SK-N-SH (cell line): ENCODE measurements at regions of chr11 and their contacts with region 1.

Region 1: DNA sequence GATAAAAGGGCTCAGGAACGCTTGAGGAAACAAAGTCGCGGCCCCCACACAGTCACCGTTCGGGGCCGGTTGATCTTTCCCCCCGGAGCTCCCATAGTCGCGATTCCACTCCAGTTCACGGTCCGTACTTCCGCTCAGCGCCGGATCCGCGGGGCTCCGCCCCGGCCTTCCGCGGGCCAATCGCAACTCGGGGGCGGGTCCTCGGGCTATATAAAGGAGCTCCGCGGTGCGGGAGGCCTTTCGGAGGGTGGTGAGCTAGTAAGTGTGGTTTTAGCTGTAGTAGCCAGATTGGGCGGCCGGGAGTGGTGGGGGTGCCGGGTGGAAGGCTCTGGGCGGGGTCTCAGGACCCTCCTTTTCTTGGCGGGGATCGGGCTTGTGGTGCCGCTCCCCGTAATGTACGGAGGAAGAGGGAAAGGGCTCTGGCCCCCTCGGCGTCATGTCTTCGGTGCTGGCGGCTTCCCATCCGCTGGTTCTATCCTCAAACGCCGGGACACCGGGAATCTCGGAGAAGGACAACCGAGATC is at the starts of genes C11orf98 and CSKMT:
- DNase-seq: peak; percentile 97
- H3K4me3 ChIP-seq: peak within 1 kb of the TSS; percentile 78 to 95
- H3K27ac ChIP-seq: peak within 1 kb of the TSS; percentile 91 to 92
- H3K4me1 ChIP-seq: peaks cover 16 to 21% of the 10 kb centered on the region in 2 experiments; a peak in 3 of 4 replicates
- H3K27me3 ChIP-seq: no peaks in the 10 kb centered on the region
- CTCF ChIP-seq: no peak
- EP300 ChIP-seq: 0 out of 4 replicates have a peak, but pooled peaks of 1 of the 2 experiments have one; percentile 31
- RAD21 ChIP-seq: no peak
- polyA plus RNA-seq, gene C11orf98: 90.1 and 126 TPM in 2 replicates
- polyA plus RNA-seq, gene CSKMT: 9.5 and 11.1 TPM in 2 replicates

Region 2: GRCh38 chr11:62591448-62592145 is 73.5 kb before region 1 on chr11 and contains the start of gene TUT1:
- CTCF ChIA-PET with region 1: interaction called, 5 read pairs
- POLR2A ChIA-PET with region 1: interaction called, 52 read pairs
- DNase-seq: peak; percentile 83
- H3K4me3 ChIP-seq: peak within 1 kb of the TSS; percentile 77 to 78
- H3K27ac ChIP-seq: peak within 1 kb of the TSS; percentile 86 to 94
- H3K4me1 ChIP-seq: peaks cover 13 to 17% of the 10 kb centered on the region in 2 experiments; a peak in 3 of 4 replicates
- H3K27me3 ChIP-seq: no peaks in the 10 kb centered on the region
- CTCF ChIP-seq: no peak; the same call in 1 of the 2 replicates
- EP300 ChIP-seq: 0 out of 4 replicates have a peak, but pooled peaks of 1 of the 2 experiments have one; percentile 22
- RAD21 ChIP-seq: no peak
- polyA plus RNA-seq, gene TUT1: 27.3 and 30.0 TPM in 2 replicates

Region 3: DNA sequence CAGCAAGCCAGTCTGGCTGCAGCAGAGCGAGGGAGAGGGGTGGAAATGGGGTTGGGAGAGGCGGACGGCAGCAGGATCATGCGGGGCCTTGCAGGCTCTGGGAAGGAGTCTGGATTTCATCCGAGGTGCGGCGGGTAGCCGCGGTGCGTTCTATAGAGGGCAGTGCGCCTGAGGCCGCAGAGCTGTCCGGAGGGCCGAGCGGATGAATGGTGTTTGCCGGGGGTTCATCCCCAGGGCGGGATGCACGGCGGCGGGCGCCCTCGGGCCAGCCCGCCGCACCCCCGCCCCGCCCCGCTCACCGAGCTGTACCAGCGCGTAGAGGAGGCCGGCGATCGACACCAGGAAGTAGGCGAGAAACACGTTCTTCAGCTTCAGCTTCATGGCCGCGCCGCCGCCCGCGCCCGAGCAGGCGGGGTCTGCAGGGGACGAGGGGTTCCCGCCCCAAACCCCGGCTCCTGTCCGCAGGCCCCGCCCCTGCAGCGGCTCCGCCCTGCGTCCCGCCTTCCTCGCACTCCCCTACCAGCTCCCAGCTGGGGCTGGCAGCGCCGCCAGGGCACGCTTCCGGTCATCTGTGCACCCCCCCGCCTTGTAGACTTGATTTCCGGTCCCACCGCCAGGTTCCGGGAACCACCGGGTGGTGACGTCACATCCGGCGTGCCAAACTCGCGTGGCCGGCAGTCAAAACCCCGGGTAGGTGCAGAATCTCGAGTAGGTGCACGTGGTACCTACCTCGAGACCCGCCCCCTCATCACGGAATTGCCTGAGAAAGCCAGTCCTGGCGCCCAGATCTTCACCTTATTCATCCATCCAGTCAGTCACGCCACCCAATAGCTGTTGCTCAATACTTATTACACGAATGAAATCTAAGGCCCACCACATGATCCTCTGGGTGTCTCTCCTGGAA is 43.3 kb before region 1 on chr11 and contains the start of gene B3GAT3:
- CTCF ChIA-PET with region 1: interaction called, 4 read pairs
- POLR2A ChIA-PET with region 1: interaction called, 27 read pairs
- DNase-seq: peak; percentile 99
- H3K4me3 ChIP-seq: peak within 1 kb of the TSS; percentile 77 to 92
- H3K27ac ChIP-seq: peak within 1 kb of the TSS; percentile 78 to 86
- H3K4me1 ChIP-seq: peaks cover 7 to 15% of the 10 kb centered on the region in 2 experiments; a peak in 3 of 4 replicates
- H3K27me3 ChIP-seq: no peaks in the 10 kb centered on the region
- CTCF ChIP-seq: 0 out of 2 replicates have a peak, but pooled peaks have one; percentile 6
- EP300 ChIP-seq: 0 out of 4 replicates have a peak, but pooled peaks of 1 of the 2 experiments have one; percentile 24
- RAD21 ChIP-seq: no peak
- polyA plus RNA-seq, gene B3GAT3: 104 and 116 TPM in 2 replicates

Region 4: DNA sequence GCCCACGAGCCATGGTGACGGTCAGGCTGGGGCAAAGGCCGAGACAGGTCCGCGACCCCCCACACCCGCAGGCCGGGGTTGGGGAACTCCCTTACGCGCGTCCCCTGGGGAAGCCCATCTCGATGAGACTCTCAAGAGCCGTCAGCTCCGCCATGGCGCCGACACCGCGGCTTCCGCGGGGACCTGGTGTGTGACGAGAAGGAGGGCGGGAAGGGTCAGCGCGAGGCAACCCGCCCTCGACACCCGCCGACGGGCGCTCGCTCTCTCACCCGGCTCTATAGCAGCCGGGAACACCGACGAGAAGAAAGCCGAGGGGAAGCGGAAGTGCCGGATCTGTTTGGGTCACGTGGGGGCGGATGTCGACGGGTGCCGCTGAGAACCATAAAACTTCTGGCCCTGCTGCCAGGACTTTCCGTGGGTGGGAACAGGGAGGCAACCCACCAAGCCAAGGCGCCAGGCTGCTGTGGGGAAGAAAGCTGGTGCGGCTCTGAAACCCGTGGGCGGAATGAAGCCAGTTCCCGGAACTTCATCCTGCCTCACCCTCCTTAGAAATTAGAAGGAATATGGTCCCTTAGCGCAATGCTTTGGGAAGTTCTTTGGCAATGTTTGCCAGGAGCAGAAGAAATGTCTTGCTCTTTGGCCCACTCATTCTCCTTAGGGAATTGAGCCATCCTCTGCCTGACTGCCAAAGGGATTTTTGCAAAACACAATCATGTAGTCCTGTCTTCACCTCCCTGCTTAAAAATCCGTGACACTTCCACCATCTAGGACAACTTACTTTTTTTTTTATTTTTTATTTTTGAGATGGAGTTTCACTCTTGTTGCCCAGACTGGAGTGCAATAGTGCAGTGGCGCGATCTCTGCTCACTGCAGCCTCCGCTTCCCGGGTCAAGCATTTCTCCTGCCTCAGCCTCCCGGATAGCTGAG is 13.9 kb after region 1 on chr11 and contains the start of gene UBXN1:
- CTCF ChIA-PET with region 1: interaction called, 4 read pairs
- POLR2A ChIA-PET with region 1: interaction called, 13 read pairs
- DNase-seq: peak; percentile 93
- H3K4me3 ChIP-seq: peak within 1 kb of the TSS; percentile 79 to 98
- H3K27ac ChIP-seq: peak within 1 kb of the TSS; percentile 70 to 77; a peak in 3 of 4 replicates
- H3K4me1 ChIP-seq: peaks cover 11 to 15% of the 10 kb centered on the region in 2 experiments; a peak in 3 of 4 replicates
- H3K27me3 ChIP-seq: no peaks in the 10 kb centered on the region
- CTCF ChIP-seq: no peak
- EP300 ChIP-seq: peak in 1 of 2 experiments; percentile 15; a peak in 2 of 4 replicates
- RAD21 ChIP-seq: no peak
- polyA plus RNA-seq, gene UBXN1: 202 and 256 TPM in 2 replicates

Region 5: DNA sequence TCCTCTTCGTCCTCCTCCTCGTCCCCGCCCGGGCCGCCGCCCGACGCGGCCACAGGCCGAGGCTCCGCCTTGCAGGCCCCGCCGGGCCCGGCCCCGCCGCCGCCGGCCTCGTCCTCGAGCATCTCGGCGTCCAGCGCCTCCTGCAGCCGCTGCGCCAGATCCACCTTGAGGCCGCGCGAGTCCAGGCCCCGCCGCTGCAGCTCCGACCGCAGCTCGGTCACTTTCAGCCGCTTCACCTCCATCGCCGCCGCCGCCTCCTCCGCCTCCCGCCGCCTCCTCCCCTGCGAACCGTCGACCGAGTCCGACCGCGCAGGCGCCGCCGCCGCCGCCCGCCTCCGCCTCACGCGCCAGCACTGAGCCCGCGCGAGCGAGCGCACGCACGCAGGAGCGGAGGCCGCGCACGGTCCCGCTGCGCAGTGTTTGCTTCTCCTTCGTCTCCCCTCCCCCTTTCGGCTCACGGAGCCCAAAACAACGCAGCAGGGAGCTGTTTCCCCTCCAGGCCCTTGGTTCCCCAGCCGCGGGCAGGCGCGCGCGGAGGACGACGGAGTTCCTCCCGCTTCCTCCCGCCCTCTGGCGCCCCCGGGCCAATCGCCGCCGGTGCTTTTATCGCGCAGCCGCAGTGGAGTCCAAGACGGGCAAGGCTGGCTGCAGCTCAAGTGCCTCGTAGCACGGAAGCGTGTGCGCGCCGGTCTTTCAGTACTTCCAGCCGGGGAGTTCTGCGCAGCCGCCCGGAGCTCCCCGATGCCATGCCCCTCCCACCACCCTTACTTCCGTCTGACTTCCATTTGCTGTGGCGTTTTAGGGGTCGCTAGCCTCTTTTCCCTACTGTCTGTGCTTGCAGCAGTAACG is 62.0 kb after region 1 on chr11 and contains the start of gene HNRNPUL2:
- CTCF ChIA-PET with region 1: no interaction called
- POLR2A ChIA-PET with region 1: interaction called, 17 read pairs
- DNase-seq: peak; percentile 95
- H3K4me3 ChIP-seq: peak within 1 kb of the TSS; percentile 89 to 92
- H3K27ac ChIP-seq: peak within 1 kb of the TSS; percentile 99
- H3K4me1 ChIP-seq: peaks cover 12 to 21% of the 10 kb centered on the region in 2 experiments; a peak in 3 of 4 replicates
- H3K27me3 ChIP-seq: no peaks in the 10 kb centered on the region
- CTCF ChIP-seq: no peak; the same call in 1 of the 2 replicates
- EP300 ChIP-seq: no peak
- RAD21 ChIP-seq: no peak
- polyA plus RNA-seq, gene HNRNPUL2: 31.0 and 33.5 TPM in 2 replicates

Region 6: DNA sequence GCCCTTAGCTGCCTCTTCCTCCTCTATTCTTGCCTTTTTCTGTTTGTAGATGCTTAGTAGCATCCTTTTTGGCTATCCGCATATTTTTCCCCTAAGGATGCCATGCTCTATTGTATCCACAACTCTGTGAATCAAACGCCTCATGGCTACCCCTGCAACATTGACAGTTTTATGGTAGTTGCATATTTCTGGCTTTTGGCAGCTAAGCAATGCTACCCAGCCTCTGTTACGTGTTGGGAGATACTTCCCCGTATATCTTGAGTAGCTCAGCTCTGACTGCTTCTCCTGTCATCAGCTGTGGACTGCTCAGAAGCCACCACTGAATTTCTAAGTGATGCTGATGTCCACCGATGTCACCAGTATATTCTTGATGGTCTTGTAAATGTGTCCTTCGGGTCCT is 200.5 kb after region 1 on chr11:
- CTCF ChIA-PET with region 1: no interaction called
- POLR2A ChIA-PET with region 1: no interaction called
- DNase-seq: no peak
- H3K4me3 ChIP-seq: no peak overlapping the region
- H3K27ac ChIP-seq: no peak overlapping the region
- H3K4me1 ChIP-seq: peaks cover 2 to 6% of the 10 kb centered on the region in 2 experiments; a peak in 2 of 4 replicates
- H3K27me3 ChIP-seq: no peaks in the 10 kb centered on the region
- CTCF ChIP-seq: no peak
- EP300 ChIP-seq: no peak
- RAD21 ChIP-seq: no peak